Naive thymus-derived CD4-positive, alpha-beta T cell (primary cell): ENCODE measurements at regions of chr20 and their contacts with region 1.

Region 1: GRCh38 chr20:46757754-46758678 is 48.6 kb downstream of the SLC2A10 start:
- DNase-seq: peak in 8 of 9 donors; percentile 21 to 51 (median 42)
- ATAC-seq: peak; percentile 78
- H3K4me3 ChIP-seq: no peak overlapping the region
- H3K4me3 Mint-ChIP-seq: no peak overlapping the region
- H3K27ac ChIP-seq: no peak overlapping the region
- H3K27ac Mint-ChIP-seq: no peak overlapping the region
- H3K4me1 ChIP-seq: no peaks in the 10 kb centered on the region
- H3K4me1 Mint-ChIP-seq: peaks cover 4 to 10% (median 6%) of the 10 kb centered on the region in 7 donors
- H3K27me3 ChIP-seq: no peaks in the 10 kb centered on the region
- H3K27me3 Mint-ChIP-seq: peaks cover 0 to 13% (median 11%) of the 10 kb centered on the region in 5 donors

Region 2: GRCh38 chr20:47020231-47020630 is 262.2 kb after region 1 on chr20:
- CTCF ChIA-PET with region 1: no interaction called
- POLR2A ChIA-PET with region 1: no interaction called
- intact Hi-C with region 1: loop called in 1 of 2 experiments (anchors 2 kb)
- DNase-seq: no peak
- ATAC-seq: no peak
- H3K4me3 ChIP-seq: no peak overlapping the region
- H3K4me3 Mint-ChIP-seq: no peak overlapping the region
- H3K27ac ChIP-seq: no peak overlapping the region
- H3K27ac Mint-ChIP-seq: no peak overlapping the region
- H3K4me1 ChIP-seq: no peaks in the 10 kb centered on the region
- H3K4me1 Mint-ChIP-seq: peaks cover 0 to 3% (median 0%) of the 10 kb centered on the region in 7 donors
- H3K27me3 ChIP-seq: no peaks in the 10 kb centered on the region
- H3K27me3 Mint-ChIP-seq: peaks cover 18 to 43% (median 26%) of the 10 kb centered on the region in 5 donors

Region 3: GRCh38 chr20:47150403-47151152 is 392.6 kb after region 1 on chr20:
- CTCF ChIA-PET with region 1: no interaction called
- POLR2A ChIA-PET with region 1: no interaction called
- intact Hi-C with region 1: loop called in 1 of 2 experiments (anchors 1 kb)
- DNase-seq: peak in 2 of 9 donors; percentile 4 to 11
- ATAC-seq: peak; percentile 85
- H3K4me3 ChIP-seq: no peak overlapping the region
- H3K4me3 Mint-ChIP-seq: no peak overlapping the region
- H3K27ac ChIP-seq: no peak overlapping the region
- H3K27ac Mint-ChIP-seq: no peak overlapping the region
- H3K4me1 ChIP-seq: no peaks in the 10 kb centered on the region
- H3K4me1 Mint-ChIP-seq: peaks cover 0 to 1% (median 0%) of the 10 kb centered on the region in 7 donors
- H3K27me3 ChIP-seq: no peaks in the 10 kb centered on the region
- H3K27me3 Mint-ChIP-seq: peaks cover 5 to 32% (median 26%) of the 10 kb centered on the region in 5 donors

Region 4: GRCh38 chr20:47389867-47390347 is 631.9 kb after region 1 on chr20:
- CTCF ChIA-PET with region 1: no interaction called
- POLR2A ChIA-PET with region 1: no interaction called
- intact Hi-C with region 1: loop called in 1 of 2 experiments (anchors 10 kb)
- DNase-seq: no peak
- ATAC-seq: peak; percentile 49
- H3K4me3 ChIP-seq: no peak overlapping the region
- H3K4me3 Mint-ChIP-seq: no peak overlapping the region
- H3K27ac ChIP-seq: no peak overlapping the region
- H3K27ac Mint-ChIP-seq: peak overlapping the region in 1 of 9 donors; percentile 33
- H3K4me1 ChIP-seq: no peaks in the 10 kb centered on the region
- H3K4me1 Mint-ChIP-seq: peaks cover 0 to 16% (median 0%) of the 10 kb centered on the region in 7 donors
- H3K27me3 ChIP-seq: no peaks in the 10 kb centered on the region
- H3K27me3 Mint-ChIP-seq: no peaks in the 10 kb centered on the region